ENCODE measurements at regions of chr5 and their contacts with region 1.

Region 1: DNA sequence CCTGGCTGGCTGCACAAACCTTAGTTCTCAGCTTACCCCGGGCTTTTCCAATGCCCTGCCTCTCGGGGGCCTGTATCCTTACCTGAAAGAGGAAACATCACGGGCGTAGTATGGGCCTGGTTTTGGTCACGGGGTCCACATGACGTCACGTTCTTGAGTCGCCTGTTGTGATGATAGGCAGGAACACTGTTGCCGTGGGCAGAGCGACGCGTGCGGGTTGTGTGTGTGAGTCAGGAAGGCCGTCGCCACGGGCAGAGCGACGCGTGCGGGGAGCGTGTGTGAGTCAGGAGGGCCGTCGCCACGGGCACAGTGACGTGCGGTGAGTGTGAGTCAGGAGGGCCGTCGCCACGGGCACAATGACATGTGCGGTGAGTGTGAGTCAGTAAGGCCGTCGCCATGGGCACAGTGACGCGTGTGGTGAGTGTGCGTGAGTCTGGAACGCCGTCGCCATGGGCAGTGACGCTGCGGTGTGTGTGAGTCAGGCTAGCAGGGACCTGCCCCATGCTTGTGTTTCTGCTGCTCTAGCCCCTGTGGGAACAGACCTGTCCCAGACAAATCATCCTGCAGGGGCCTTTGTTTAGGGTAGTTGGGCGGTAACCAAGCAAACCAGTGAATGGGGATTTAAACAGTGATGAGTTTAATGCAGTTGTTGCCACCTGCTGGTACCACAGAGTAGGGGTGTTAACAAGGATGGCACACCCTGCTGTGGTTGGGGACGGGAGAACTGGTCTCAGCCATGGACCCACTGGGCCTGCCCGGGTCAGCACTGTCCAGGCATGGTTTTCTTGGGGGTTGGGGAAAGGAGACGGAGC is 19.8 kb downstream of the TRIP13 start:
- DNase-seq: peak; percentile 96 to 98
- ATAC-seq: peak; percentile 95 to 96
- H3K4me3 ChIP-seq: 0 out of 3 replicates have a peak overlapping the region, but pooled peaks have one; percentile 2
- H3K27ac ChIP-seq: peak overlapping the region; percentile 60 to 83
- H3K4me1 ChIP-seq: peaks cover 24% of the 10 kb centered on the region
- CTCF ChIP-seq: peak; percentile 47
- EP300 ChIP-seq: peak; percentile 54 to 83; a peak in 3 of 5 replicates
- POLR2A ChIP-seq: no peak
- RAD21 ChIP-seq: peak in 1 of 2 experiments; percentile 27; a peak in 2 of 5 replicates

Region 2: DNA sequence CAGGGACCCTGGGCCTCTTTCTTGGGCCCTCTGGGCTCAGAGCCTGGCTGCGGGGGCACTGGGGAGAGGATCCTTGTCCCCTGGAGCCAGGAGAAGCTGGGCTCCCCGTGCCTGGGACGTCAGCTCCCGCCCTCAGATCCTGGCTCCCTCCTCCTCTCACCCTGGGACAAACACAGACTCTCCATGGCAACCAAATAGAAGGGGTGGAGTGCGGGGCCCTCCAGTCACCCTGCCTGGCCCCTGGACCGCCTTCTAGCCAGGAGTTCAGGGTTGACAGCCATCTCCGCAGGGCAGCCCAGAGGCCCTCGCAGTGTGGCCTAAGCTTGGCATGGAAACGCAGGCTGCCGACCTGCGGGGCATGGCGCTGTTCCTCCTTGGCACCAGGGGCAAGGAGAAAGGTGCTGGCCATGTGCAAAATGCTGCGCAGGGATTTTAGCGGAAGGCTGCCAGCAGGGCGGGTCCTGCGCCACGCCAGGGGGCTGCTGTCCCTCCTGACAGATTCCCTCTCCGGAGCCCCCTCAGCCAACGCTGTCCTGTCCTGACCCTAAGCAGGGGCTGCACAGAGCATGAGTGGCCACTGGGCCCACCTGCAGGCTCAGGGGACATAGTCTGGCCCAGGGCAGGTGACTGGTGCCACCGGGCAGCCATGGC is 62.7 kb before region 1 on chr5:
- CTCF ChIA-PET with region 1: no interaction called
- POLR2A ChIA-PET with region 1: no interaction called
- DNase-seq: no peak
- ATAC-seq: no peak
- H3K4me3 ChIP-seq: no peak overlapping the region
- H3K27ac ChIP-seq: no peak overlapping the region
- H3K4me1 ChIP-seq: no peaks in the 10 kb centered on the region
- CTCF ChIP-seq: no peak
- EP300 ChIP-seq: no peak
- POLR2A ChIP-seq: no peak
- RAD21 ChIP-seq: no peak

Region 3: GRCh38 chr5:902129-902916 is 10.2 kb before region 1 on chr5:
- CTCF ChIA-PET with region 1: interaction called, 17 read pairs
- POLR2A ChIA-PET with region 1: no interaction called
- DNase-seq: no peak
- ATAC-seq: no peak
- H3K4me3 ChIP-seq: no peak overlapping the region
- H3K27ac ChIP-seq: no peak overlapping the region
- H3K4me1 ChIP-seq: no peaks in the 10 kb centered on the region
- CTCF ChIP-seq: no peak
- EP300 ChIP-seq: no peak
- POLR2A ChIP-seq: no peak
- RAD21 ChIP-seq: no peak